ENCODE measurements at regions of chr9 and their contacts with region 1.

Region 1: GRCh38 chr9:120767456-120768167 is 25.6 kb downstream of the FBXW2 start:
- DNase-seq: no peak
- ATAC-seq: no peak
- H3K4me3 ChIP-seq: no peak overlapping the region
- H3K27ac ChIP-seq: peak overlapping the region; percentile 59
- H3K4me1 ChIP-seq: peaks cover 12 to 34% of the 10 kb centered on the region in 2 experiments
- H3K27me3 ChIP-seq: no peaks in the 10 kb centered on the region
- CTCF ChIP-seq: no peak
- EP300 ChIP-seq: peak; percentile 27; the same call in 1 of the 2 replicates
- POLR2A ChIP-seq: no peak
- RAD21 ChIP-seq: no peak

Region 2: DNA sequence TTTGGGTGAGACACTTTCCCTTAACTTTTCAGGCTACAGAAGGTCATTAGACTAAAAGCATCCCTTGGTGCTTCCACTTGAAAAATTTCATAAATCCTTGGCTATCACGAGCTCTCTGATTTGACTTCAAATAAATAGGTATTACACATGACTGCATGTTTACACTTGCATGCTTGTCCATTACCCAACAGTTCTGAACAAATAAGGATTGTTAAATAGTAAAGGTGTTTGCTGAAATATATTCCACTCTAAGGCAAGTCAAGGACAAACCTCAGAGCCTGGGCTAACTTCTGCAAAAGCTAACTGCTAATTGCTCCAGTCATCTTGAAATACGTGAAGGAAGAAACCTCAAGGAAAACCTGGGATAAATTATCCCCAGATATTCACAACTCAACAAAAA is 11.1 kb after region 1 on chr9:
- CTCF ChIA-PET with region 1: no interaction called
- POLR2A ChIA-PET with region 1: interaction called, 19 read pairs
- in situ Hi-C with region 1: no loop called
- intact Hi-C with region 1: no loop called
- DNase-seq: no peak
- ATAC-seq: no peak
- H3K4me3 ChIP-seq: no peak overlapping the region
- H3K27ac ChIP-seq: no peak overlapping the region
- H3K4me1 ChIP-seq: peaks cover 17 to 38% of the 10 kb centered on the region in 2 experiments; a peak in 3 of 5 replicates
- H3K27me3 ChIP-seq: no peaks in the 10 kb centered on the region
- CTCF ChIP-seq: no peak
- EP300 ChIP-seq: no peak
- POLR2A ChIP-seq: no peak
- RAD21 ChIP-seq: no peak

Measured in K562 (cell line).